GM10248 (cell line): ENCODE measurements at regions of chr3 and their contacts with region 1.

Region 1: DNA sequence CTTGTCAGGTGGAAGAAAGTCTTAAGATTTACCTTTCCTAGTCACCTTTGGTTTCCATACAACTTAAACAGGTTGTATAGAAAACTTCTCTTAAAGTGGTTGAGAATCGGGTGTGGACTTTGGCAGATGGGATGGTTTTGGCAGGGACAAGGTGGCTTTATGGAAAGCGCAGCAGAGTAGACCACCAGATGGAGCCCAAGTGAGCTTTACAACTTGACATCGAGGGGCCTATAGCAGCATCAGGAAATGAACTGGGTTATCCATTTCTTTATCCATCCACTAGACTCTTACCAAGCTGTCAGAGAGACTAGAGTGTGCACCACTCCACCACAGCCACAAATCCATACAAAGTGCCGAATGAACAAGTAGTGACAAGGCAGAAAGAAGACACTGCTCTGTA is 85.3 kb upstream of the MBNL1 start:
- DNase-seq: peak; percentile 23
- CTCF ChIP-seq: peak; percentile 45

Region 2: GRCh38 chr3:152193673-152194267 is 10.3 kb after region 1 on chr3:
- CTCF ChIA-PET with region 1: interaction called, 13 read pairs
- POLR2A ChIA-PET with region 1: no interaction called
- DNase-seq: peak; percentile 20
- CTCF ChIP-seq: no peak

Region 3: GRCh38 chr3:152243721-152244516 is 60.4 kb after region 1 on chr3:
- CTCF ChIA-PET with region 1: interaction called, 12 read pairs
- POLR2A ChIA-PET with region 1: interaction called, 3 read pairs
- DNase-seq: no peak
- CTCF ChIP-seq: no peak

Region 4: GRCh38 chr3:152444029-152444641 is 260.7 kb after region 1 on chr3:
- CTCF ChIA-PET with region 1: interaction called, 42 read pairs
- POLR2A ChIA-PET with region 1: no interaction called
- DNase-seq: peak; percentile 17
- CTCF ChIP-seq: peak; percentile 60